Uterus (tissue), 4 donors: ENCODE measurements at regions of chr3 and their contacts with region 1.

Region 1: GRCh38 chr3:132722164-132723024 is at the start of gene NPHP3:
- DNase-seq: peak; percentile 97 to 99
- H3K4me3 ChIP-seq: peak within 1 kb of the TSS; percentile 86 to 90
- H3K27ac ChIP-seq: peak within 1 kb of the TSS; percentile 96 to 97
- H3K4me1 ChIP-seq: no peaks in the 10 kb centered on the region
- H3K27me3 ChIP-seq: no peaks in the 10 kb centered on the region
- CTCF ChIP-seq: peak in 2 of 4 experiments; percentile 1 to 2
- POLR2A ChIP-seq: peak; percentile 86 to 89
- total RNA-seq, gene NPHP3: 50.3 to 111 (median 57.8) TPM

Region 2: GRCh38 chr3:132606085-132606484 is 116.3 kb before region 1 on chr3:
- intact Hi-C with region 1: no loop called
- DNase-seq: no peak
- H3K4me3 ChIP-seq: no peak overlapping the region
- H3K27ac ChIP-seq: peak overlapping the region; percentile 60 to 70
- H3K4me1 ChIP-seq: no peaks in the 10 kb centered on the region
- H3K27me3 ChIP-seq: no peaks in the 10 kb centered on the region
- CTCF ChIP-seq: no peak
- POLR2A ChIP-seq: no peak

Region 3: GRCh38 chr3:132981719-132982118 is 259.3 kb after region 1 on chr3:
- intact Hi-C with region 1: no loop called
- DNase-seq: no peak
- H3K4me3 ChIP-seq: no peak overlapping the region
- H3K27ac ChIP-seq: no peak overlapping the region
- H3K4me1 ChIP-seq: no peaks in the 10 kb centered on the region
- H3K27me3 ChIP-seq: no peaks in the 10 kb centered on the region
- CTCF ChIP-seq: no peak
- POLR2A ChIP-seq: no peak

Region 4: GRCh38 chr3:133426721-133427120 is 704.3 kb after region 1 on chr3:
- intact Hi-C with region 1: loop called (anchors 10 kb)
- DNase-seq: no peak
- H3K4me3 ChIP-seq: no peak overlapping the region
- H3K27ac ChIP-seq: no peak overlapping the region
- H3K4me1 ChIP-seq: no peaks in the 10 kb centered on the region
- H3K27me3 ChIP-seq: no peaks in the 10 kb centered on the region
- CTCF ChIP-seq: no peak
- POLR2A ChIP-seq: no peak

Region 5: DNA sequence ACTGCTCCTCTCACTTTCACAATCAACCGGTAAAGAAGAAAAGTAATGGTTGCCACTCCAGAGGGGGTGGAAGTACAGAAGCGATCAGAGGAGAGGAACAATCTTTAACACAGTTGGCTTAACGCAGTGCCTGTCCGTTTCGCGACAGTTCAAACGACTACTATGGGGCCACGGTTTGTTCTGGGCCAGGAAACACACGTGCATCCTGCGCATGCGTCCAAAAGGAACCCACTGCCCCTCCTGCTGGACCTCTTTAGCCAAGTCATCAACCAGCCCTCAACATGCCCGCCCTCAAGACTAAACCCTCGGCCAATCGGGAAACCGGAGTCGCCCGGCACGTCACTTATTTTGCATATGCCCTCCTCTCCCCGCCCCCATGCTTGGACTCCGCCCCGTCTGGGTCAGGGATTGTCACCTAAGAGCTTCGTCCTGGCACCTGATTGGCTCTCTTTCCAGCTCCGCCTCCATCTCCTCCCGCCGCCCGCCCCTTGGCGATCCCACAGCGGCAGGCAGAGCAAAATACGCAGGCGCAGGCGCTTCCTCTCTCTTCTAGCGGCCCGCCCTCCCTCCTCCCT is 850.7 kb after region 1 on chr3:
- intact Hi-C with region 1: loop called (anchors 10 kb)
- DNase-seq: peak; percentile 100
- H3K4me3 ChIP-seq: peak overlapping the region; percentile 60 to 65
- H3K27ac ChIP-seq: peak overlapping the region; percentile 95 to 99
- H3K4me1 ChIP-seq: peaks cover 3 to 6% of the 10 kb centered on the region in 2 donors
- H3K27me3 ChIP-seq: no peaks in the 10 kb centered on the region
- CTCF ChIP-seq: peak in 1 of 4 experiments; percentile 7
- POLR2A ChIP-seq: peak; percentile 36 to 68